Posterior vena cava (tissue), 2 donors: ENCODE measurements at regions of chr18 and their contacts with region 1.

Region 1: DNA sequence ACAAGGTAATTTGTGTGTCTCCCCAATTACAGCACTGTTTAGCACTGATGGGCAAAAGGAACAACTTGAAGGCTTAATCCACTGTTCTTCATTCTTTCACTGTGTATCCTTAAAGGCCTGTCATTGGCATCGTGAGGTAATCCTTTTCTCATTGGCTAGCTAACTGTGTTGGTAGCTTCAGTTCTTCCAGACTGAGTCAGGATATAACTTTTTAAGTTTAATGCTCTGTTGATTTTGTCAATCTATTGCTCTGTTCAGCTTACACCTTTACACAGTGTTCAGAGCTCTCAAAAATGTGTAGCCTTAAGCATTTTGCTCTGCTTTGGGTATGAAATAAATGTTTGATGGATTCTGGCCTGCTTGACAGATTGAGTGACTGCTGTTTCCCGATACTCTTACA is 148.2 kb downstream of the KIAA1328 start:
- DNase-seq: no peak

Region 2: DNA sequence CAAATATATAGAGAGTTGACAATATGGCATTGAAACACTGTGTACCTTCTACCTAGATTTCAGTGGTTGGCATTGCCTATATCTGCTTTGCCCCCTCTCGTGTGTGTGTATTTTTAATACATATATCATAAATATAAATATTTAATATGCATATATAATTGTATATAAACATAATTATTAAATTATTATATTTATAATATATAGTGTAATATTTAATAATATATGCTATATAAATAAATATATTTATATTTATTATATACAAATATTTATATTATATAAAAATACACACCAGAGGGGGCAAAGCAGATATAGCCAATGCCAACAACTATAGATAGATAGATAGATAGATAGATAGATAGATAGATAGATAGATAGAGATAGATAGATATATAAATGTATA is 24.1 kb before region 1 on chr18:
- intact Hi-C with region 1: loop called in 1 of 2 experiments (anchors 2 kb)
- DNase-seq: no peak

Region 3: GRCh38 chr18:37160038-37160820 is 183.1 kb after region 1 on chr18:
- intact Hi-C with region 1: no loop called
- DNase-seq: no peak